ENCODE measurements at regions of chr2 and their contacts with region 1.

Region 1: GRCh38 chr2:172555522-172556283 is at the start of gene PDK1:
- DNase-seq: peak; percentile 95
- ATAC-seq: peak; percentile 92
- H3K4me3 Mint-ChIP-seq: peak within 1 kb of the TSS; percentile 95
- H3K27ac Mint-ChIP-seq: peak within 1 kb of the TSS; percentile 93
- H3K4me1 Mint-ChIP-seq: peaks cover 35% of the 10 kb centered on the region
- H3K27me3 Mint-ChIP-seq: no peaks in the 10 kb centered on the region
- CTCF ChIP-seq: no peak
- total RNA-seq, gene PDK1: 14.8 and 16.3 TPM in 2 replicates

Region 2: DNA sequence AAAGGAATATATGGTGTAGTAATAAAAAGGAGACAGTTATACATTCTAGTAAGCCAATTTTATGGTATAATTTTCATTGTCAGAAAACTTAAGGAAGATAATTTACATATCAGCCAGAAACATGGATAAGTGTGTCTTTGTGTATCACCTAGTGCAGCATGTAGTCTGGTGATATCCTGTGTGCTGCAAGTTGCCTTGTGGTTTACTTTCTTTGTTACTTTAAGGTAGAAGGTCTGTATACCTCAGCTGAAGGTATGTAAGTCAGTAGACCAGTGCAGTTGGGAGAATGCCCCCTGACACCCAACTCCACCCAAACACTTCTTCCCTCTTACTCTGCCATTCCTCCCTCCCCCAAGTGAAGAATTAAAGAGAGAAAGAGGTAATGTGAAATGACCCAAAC is 1615.6 kb before region 1 on chr2:
- CTCF ChIA-PET with region 1: no interaction called
- POLR2A ChIA-PET with region 1: no interaction called
- intact Hi-C with region 1: no loop called
- DNase-seq: no peak
- ATAC-seq: no peak
- H3K4me3 Mint-ChIP-seq: no peak overlapping the region
- H3K27ac Mint-ChIP-seq: no peak overlapping the region
- H3K4me1 Mint-ChIP-seq: peaks cover 39% of the 10 kb centered on the region
- H3K27me3 Mint-ChIP-seq: no peaks in the 10 kb centered on the region
- CTCF ChIP-seq: no peak

Region 3: GRCh38 chr2:170973492-170974303 is 1582.0 kb before region 1 on chr2:
- CTCF ChIA-PET with region 1: no interaction called
- POLR2A ChIA-PET with region 1: no interaction called
- intact Hi-C with region 1: loop called (anchors 5 kb)
- DNase-seq: peak; percentile 90
- ATAC-seq: peak; percentile 96
- H3K4me3 Mint-ChIP-seq: peak overlapping the region; percentile 87
- H3K27ac Mint-ChIP-seq: peak overlapping the region; percentile 81
- H3K4me1 Mint-ChIP-seq: peaks cover 15% of the 10 kb centered on the region
- H3K27me3 Mint-ChIP-seq: no peaks in the 10 kb centered on the region
- CTCF ChIP-seq: peak; percentile 80

Region 4: GRCh38 chr2:171687287-171688128 is 868.2 kb before region 1 on chr2 and contains the start of gene DYNC1I2:
- CTCF ChIA-PET with region 1: no interaction called
- POLR2A ChIA-PET with region 1: no interaction called
- intact Hi-C with region 1: loop called (anchors 1 kb)
- DNase-seq: peak; percentile 70
- ATAC-seq: peak; percentile 87
- H3K4me3 Mint-ChIP-seq: peak within 1 kb of the TSS; percentile 95
- H3K27ac Mint-ChIP-seq: peak within 1 kb of the TSS; percentile 88
- H3K4me1 Mint-ChIP-seq: peaks cover 17% of the 10 kb centered on the region
- H3K27me3 Mint-ChIP-seq: peaks cover 2% of the 10 kb centered on the region
- CTCF ChIP-seq: no peak
- total RNA-seq, gene DYNC1I2: 52.0 and 54.6 TPM in 2 replicates

Region 5: GRCh38 chr2:171999604-172000469 is 555.9 kb before region 1 on chr2 and contains the start of gene METAP1D:
- CTCF ChIA-PET with region 1: no interaction called
- POLR2A ChIA-PET with region 1: no interaction called
- intact Hi-C with region 1: loop called (anchors 1 kb)
- DNase-seq: peak; percentile 86
- ATAC-seq: peak; percentile 96
- H3K4me3 Mint-ChIP-seq: peak within 1 kb of the TSS; percentile 95
- H3K27ac Mint-ChIP-seq: peak within 1 kb of the TSS; percentile 96
- H3K4me1 Mint-ChIP-seq: peaks cover 21% of the 10 kb centered on the region
- H3K27me3 Mint-ChIP-seq: peaks cover 4% of the 10 kb centered on the region
- CTCF ChIP-seq: no peak
- total RNA-seq, gene METAP1D: 7.7 and 13.7 TPM in 2 replicates

Region 6: GRCh38 chr2:172525606-172526005 is 30.1 kb before region 1 on chr2:
- CTCF ChIA-PET with region 1: no interaction called
- POLR2A ChIA-PET with region 1: no interaction called
- intact Hi-C with region 1: no loop called
- DNase-seq: no peak
- ATAC-seq: no peak
- H3K4me3 Mint-ChIP-seq: no peak overlapping the region
- H3K27ac Mint-ChIP-seq: no peak overlapping the region
- H3K4me1 Mint-ChIP-seq: no peaks in the 10 kb centered on the region
- H3K27me3 Mint-ChIP-seq: no peaks in the 10 kb centered on the region
- CTCF ChIP-seq: no peak

Region 7: GRCh38 chr2:172588931-172589330 is 33.2 kb after region 1 on chr2:
- CTCF ChIA-PET with region 1: no interaction called
- POLR2A ChIA-PET with region 1: interaction called, 4 read pairs
- intact Hi-C with region 1: loop called (anchors 2 kb)
- DNase-seq: no peak
- ATAC-seq: no peak
- H3K4me3 Mint-ChIP-seq: no peak overlapping the region
- H3K27ac Mint-ChIP-seq: no peak overlapping the region
- H3K4me1 Mint-ChIP-seq: no peaks in the 10 kb centered on the region
- H3K27me3 Mint-ChIP-seq: no peaks in the 10 kb centered on the region
- CTCF ChIP-seq: no peak

Region 8: DNA sequence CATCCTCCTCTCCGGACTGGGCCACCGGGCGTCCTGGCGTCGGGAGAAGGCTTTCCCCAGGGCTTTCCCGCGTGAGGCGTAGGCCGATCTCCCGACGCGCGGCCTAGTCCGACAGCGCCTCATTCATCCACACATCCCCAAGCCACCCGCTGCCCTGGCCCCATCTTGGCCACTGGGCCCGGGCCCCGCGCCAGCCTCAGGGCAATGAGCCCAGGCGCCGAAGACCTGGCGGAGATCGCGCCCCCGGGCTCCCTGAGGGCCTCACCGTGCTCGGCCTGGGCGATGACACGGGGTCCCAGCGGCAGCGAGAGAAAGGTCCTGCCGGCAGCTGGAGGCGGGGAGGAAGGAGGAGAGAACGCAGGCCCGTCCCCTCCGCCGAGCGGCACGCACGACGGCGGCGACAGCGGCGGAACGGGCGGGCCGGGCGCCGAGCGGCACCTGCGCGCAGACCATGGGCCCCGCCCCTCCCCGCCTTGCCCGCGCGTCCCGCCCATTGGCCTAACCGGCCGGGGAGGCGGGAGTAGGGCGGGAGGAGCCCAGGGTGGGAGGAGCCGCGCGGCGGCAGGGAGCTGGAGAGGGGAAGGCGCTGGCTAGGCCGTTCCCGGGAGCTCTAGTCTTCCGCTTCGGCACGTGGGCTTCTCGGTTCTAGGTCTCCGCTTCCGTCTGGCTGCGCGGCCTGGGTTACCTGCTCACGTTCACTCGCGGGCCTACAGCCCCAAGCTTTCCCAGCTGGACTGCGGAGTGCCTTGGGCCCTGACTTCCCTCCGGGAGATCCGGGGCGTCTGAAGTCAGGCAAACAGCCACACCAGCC is 1692.7 kb after region 1 on chr2 and contains the start of gene OLA1:
- CTCF ChIA-PET with region 1: no interaction called
- POLR2A ChIA-PET with region 1: no interaction called
- intact Hi-C with region 1: loop called (anchors 5 kb)
- DNase-seq: peak; percentile 99
- ATAC-seq: peak; percentile 97
- H3K4me3 Mint-ChIP-seq: peak within 1 kb of the TSS; percentile 88
- H3K27ac Mint-ChIP-seq: peak within 1 kb of the TSS; percentile 86
- H3K4me1 Mint-ChIP-seq: peaks cover 27% of the 10 kb centered on the region
- H3K27me3 Mint-ChIP-seq: no peaks in the 10 kb centered on the region
- CTCF ChIP-seq: no peak
- total RNA-seq, gene OLA1: 74.4 and 86.6 TPM in 2 replicates

Region 9: GRCh38 chr2:174487108-174487819 is 1931.6 kb after region 1 on chr2:
- CTCF ChIA-PET with region 1: no interaction called
- POLR2A ChIA-PET with region 1: no interaction called
- intact Hi-C with region 1: loop called (anchors 2 kb)
- DNase-seq: peak; percentile 86
- ATAC-seq: peak; percentile 97
- H3K4me3 Mint-ChIP-seq: peak overlapping the region; percentile 96
- H3K27ac Mint-ChIP-seq: peak overlapping the region; percentile 93
- H3K4me1 Mint-ChIP-seq: peaks cover 41% of the 10 kb centered on the region
- H3K27me3 Mint-ChIP-seq: no peaks in the 10 kb centered on the region
- CTCF ChIP-seq: no peak